Endothelial cell of umbilical vein (primary cell): ENCODE measurements at regions of chr1 and their contacts with region 1.

Region 1: DNA sequence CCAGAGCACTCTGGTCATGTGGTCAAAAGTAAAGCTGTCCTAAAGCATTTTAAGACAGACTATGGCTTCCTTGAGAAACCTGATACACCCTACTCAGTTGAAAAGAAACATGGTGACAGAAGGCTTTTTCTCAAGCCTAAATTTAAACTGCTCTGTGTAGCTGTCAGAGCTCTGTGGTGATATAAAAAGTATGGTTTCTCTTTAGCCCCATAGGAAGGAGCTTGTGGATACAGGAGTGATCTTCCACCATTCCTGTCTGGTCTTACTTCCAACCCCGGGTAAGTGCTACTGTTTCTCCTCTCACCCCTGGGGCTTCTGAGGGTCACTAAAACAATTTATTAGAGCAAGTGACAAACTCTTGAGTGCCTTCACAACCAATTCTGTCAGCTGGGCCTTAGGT is 8.5 kb downstream of the TP53BP2 start:
- DNase-seq: no peak
- H3K4me3 ChIP-seq: no peak overlapping the region
- H3K27ac ChIP-seq: no peak overlapping the region
- H3K4me1 ChIP-seq: peaks cover 51% of the 10 kb centered on the region
- H3K27me3 ChIP-seq: no peaks in the 10 kb centered on the region
- CTCF ChIP-seq: no peak
- POLR2A ChIP-seq: no peak

Region 2: GRCh38 chr1:223780949-223781348 is 56.3 kb before region 1 on chr1:
- CTCF ChIA-PET with region 1: no interaction called
- POLR2A ChIA-PET with region 1: no interaction called
- dilution Hi-C with region 1: no loop called
- intact Hi-C with region 1: no loop called
- DNase-seq: no peak
- H3K4me3 ChIP-seq: no peak overlapping the region
- H3K27ac ChIP-seq: no peak overlapping the region
- H3K4me1 ChIP-seq: peaks cover 14% of the 10 kb centered on the region
- H3K27me3 ChIP-seq: no peaks in the 10 kb centered on the region
- CTCF ChIP-seq: no peak
- POLR2A ChIP-seq: no peak

Region 3: DNA sequence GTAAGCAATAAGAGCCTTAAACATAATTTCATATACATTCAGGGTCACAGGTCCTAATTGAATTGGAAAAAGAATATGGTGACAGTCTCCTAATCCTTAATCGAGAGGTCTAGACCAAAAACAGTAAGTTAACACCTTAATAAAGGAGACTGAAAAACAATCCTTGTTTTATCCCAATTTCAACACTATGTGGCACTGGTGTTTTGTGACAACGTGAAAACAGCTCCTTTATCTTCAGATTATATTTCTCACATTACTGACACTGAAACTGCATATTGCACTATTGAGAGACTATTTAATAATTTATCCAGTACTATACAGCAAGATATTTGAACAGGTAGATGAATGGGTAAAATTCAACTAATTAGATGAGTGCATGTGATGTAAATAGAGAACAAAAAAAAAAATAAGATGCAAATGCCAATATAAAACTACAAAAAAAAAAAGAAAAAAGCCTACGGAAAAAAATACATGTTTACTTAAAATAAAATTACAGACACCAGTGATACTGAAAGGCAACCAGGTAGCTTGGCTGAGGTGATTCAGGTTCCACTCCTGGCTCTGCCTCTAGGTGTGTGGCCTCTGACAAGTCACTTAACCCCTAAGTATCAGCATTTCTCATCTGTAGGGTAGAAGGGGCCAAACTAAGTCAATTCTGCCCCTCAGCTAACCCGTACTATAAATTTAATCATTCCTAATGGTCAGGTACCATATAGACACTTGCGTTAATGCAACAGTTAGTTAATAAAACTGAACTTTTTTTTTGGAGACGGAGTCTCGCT is 25.4 kb before region 1 on chr1:
- CTCF ChIA-PET with region 1: interaction called, 41 read pairs
- POLR2A ChIA-PET with region 1: no interaction called
- dilution Hi-C with region 1: no loop called
- intact Hi-C with region 1: no loop called
- DNase-seq: peak; percentile 68
- H3K4me3 ChIP-seq: no peak overlapping the region
- H3K27ac ChIP-seq: no peak overlapping the region
- H3K4me1 ChIP-seq: peaks cover 15% of the 10 kb centered on the region
- H3K27me3 ChIP-seq: no peaks in the 10 kb centered on the region
- CTCF ChIP-seq: peak; percentile 18 to 22
- POLR2A ChIP-seq: no peak